ENCODE measurements at regions of chr14 and their contacts with region 1.

Region 1: GRCh38 chr14:39015360-39015961 is 87.6 kb downstream of the SEC23A start:
- DNase-seq: peak; percentile 69
- H3K4me3 ChIP-seq: no peak overlapping the region
- H3K27ac ChIP-seq: no peak overlapping the region
- H3K4me1 ChIP-seq: peaks cover 5% of the 10 kb centered on the region
- H3K27me3 ChIP-seq: no peaks in the 10 kb centered on the region
- CTCF ChIP-seq: peak; percentile 90

Region 2: DNA sequence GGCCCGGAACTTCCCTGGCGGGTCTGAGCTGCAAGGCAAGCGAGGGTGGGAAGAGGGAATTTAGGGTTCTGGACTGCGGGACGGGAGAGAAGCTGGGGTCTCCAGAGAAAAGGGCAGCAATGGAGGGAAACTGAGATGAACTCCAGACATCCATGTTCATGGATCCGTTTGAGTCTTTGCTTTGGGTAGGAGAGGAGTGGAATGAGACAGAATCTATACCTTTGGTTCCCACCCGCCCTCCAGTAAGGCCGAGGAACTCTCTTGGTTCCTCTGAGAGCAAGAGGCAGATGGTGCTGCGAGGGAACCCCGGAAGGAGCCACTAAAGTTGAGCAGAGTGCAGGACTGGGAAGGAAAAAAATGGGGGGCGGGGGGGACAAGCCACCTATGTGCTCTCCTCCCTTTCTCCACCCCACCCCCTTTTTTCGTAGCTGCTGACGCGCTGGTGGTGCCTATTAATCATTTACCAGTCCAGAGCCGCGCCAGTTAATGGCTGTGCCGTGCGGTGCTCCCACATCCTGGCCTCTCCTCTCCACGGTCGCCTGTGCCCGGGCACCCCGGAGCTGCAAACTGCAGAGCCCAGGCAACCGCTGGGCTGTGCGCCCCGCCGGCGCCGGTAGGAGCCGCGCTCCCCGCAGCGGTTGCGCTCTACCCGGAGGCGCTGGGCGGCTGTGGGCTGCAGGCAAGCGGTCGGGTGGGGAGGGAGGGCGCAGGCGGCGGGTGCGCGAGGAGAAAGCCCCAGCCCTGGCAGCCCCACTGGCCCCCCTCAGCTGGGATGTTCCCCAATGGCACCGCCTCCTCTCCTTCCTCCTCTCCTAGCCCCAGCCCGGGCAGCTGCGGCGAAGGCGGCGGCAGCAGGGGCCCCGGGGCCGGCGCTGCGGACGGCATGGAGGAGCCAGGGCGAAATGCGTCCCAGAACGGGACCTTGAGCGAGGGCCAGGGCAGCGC is 806.6 kb before region 1 on chr14:
- CTCF ChIA-PET with region 1: no interaction called
- POLR2A ChIA-PET with region 1: no interaction called
- intact Hi-C with region 1: loop called (anchors 5 kb)
- DNase-seq: peak; percentile 81
- H3K4me3 ChIP-seq: peak overlapping the region; percentile 55
- H3K27ac ChIP-seq: no peak overlapping the region
- H3K4me1 ChIP-seq: peaks cover 4% of the 10 kb centered on the region
- H3K27me3 ChIP-seq: peaks cover 26% of the 10 kb centered on the region
- CTCF ChIP-seq: peak; percentile 48

Region 3: GRCh38 chr14:38605193-38606114 is 410.0 kb before region 1 on chr14:
- CTCF ChIA-PET with region 1: no interaction called
- POLR2A ChIA-PET with region 1: no interaction called
- intact Hi-C with region 1: loop called (anchors 5 kb)
- DNase-seq: peak; percentile 20
- H3K4me3 ChIP-seq: no peak overlapping the region
- H3K27ac ChIP-seq: no peak overlapping the region
- H3K4me1 ChIP-seq: no peaks in the 10 kb centered on the region
- H3K27me3 ChIP-seq: no peaks in the 10 kb centered on the region
- CTCF ChIP-seq: peak; percentile 43; the same call in 1 of the 2 replicates

Region 4: GRCh38 chr14:38721822-38722431 is 293.5 kb before region 1 on chr14:
- CTCF ChIA-PET with region 1: interaction called, 3 read pairs
- POLR2A ChIA-PET with region 1: no interaction called
- intact Hi-C with region 1: loop called (anchors 5 kb)
- DNase-seq: peak; percentile 77
- H3K4me3 ChIP-seq: no peak overlapping the region
- H3K27ac ChIP-seq: no peak overlapping the region
- H3K4me1 ChIP-seq: peaks cover 7% of the 10 kb centered on the region
- H3K27me3 ChIP-seq: no peaks in the 10 kb centered on the region
- CTCF ChIP-seq: peak; percentile 90

Region 5: GRCh38 chr14:38867561-38868150 is 147.8 kb before region 1 on chr14:
- CTCF ChIA-PET with region 1: no interaction called
- POLR2A ChIA-PET with region 1: no interaction called
- intact Hi-C with region 1: loop called (anchors 10 kb)
- DNase-seq: peak; percentile 90
- H3K4me3 ChIP-seq: no peak overlapping the region
- H3K27ac ChIP-seq: no peak overlapping the region
- H3K4me1 ChIP-seq: peaks cover 17% of the 10 kb centered on the region
- H3K27me3 ChIP-seq: no peaks in the 10 kb centered on the region
- CTCF ChIP-seq: peak; percentile 89

Region 6: DNA sequence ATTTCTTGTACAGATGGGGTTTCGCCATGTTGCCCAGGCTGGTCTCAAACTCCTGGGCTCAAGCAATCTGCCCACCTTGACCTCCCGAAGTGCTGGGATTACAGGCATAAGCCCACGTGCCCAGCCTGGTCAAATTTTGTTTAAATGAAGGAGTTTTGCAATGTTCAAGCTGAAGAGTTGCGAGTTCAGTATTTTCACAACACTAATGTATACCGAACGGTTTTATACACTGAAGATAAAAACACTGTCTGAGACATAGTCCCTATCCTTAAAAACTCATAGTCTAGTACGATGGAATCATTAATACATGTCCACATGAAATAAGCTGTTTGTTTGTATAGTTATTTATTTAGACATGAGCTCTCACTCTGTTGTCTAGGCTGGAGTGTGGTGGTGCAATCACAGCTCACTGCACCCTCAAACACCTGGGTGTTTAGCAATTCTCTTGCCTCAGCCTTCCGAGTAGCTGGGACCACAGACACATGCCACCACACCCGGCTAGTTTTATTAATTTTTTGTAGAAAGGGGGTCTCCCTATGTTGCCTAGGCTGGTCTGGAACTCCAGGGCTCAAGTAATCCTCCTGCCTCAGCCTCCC is 139.2 kb after region 1 on chr14:
- CTCF ChIA-PET with region 1: no interaction called
- POLR2A ChIA-PET with region 1: no interaction called
- intact Hi-C with region 1: no loop called
- DNase-seq: no peak
- H3K4me3 ChIP-seq: no peak overlapping the region
- H3K27ac ChIP-seq: no peak overlapping the region
- H3K4me1 ChIP-seq: no peaks in the 10 kb centered on the region
- H3K27me3 ChIP-seq: no peaks in the 10 kb centered on the region
- CTCF ChIP-seq: no peak

Measured in A673 (cell line).